ENCODE measurements at regions of chr4 and their contacts with region 1.

Region 1: DNA sequence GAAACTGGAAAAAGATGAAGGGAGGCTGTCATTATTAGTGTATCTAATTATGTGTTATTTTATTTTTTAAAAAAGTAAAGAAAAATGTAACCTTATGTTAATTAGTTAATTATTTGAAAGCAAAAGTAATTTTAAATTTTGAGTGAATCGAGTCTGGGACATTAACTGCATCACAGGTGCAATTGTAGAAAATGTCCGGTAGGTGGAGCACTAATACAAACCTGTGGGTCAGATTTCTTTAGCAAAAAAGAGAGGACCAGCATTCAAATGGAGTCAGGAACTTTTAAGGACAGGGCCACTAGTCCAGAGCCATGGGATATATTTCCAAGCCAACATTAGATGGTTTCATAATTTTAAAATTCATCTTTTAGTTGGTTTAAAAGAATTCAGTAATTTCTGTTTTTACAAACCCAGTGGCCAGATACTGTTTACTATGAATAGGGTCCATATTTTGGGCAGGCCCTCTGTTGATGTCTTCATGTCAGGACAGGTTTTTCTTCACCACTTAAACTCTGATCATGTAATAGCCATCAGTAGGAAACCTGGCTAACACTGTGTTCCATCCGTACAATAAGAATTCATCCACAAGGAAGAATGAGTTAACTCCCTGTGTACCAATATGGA is 27.2 kb downstream of the BST1 start:
- DNase-seq: peak; percentile 78
- H3K4me3 ChIP-seq: no peak overlapping the region
- H3K27ac ChIP-seq: no peak overlapping the region
- H3K4me1 ChIP-seq: peaks cover 42% of the 10 kb centered on the region
- CTCF ChIP-seq: peak; percentile 99

Region 2: DNA sequence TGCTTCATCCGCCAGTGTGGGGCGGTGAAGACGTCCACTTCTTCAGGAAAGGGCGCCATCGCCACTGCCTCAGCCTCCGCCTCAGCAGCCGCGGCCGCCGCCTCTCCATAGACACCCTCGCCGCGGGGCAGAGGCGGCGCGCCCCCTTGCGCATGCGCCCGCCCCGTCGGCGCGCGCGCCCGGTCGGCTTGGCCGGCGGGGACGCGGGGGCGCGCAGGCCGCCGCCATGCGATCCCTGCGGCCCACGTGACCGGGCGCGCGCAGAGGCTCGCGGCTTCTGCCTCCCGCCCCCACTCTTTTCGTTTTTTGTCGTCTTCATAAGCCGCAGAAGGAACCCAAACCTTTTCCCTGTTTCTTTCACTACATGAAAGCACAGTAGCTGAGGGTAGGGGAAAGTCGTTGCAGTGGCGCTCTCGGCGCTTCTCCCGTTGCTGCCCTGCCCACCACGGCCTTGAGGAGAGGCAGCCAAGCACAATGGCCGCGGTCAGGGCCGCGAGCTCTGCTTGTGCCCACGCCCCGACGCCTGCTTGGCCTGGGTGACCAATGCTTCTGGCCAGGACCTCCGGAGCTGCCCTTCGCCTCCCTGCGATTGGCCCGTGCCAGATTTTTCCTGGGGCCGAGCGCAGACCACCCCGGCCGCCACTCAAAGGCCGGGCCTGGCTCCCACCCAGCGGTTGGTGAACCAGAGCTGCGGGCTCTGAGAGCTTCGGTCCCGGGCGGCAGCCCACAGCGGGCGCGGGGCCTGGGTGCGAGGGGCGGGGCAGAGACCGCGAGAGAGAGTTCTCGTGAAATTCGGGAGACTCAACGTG is 74.6 kb before region 1 on chr4 and contains the start of gene FBXL5:
- CTCF ChIA-PET with region 1: no interaction called
- POLR2A ChIA-PET with region 1: interaction called, 3 read pairs
- intact Hi-C with region 1: loop called (anchors 2 kb)
- DNase-seq: peak; percentile 92
- H3K4me3 ChIP-seq: peak within 1 kb of the TSS; percentile 92
- H3K27ac ChIP-seq: peak within 1 kb of the TSS; percentile 68
- H3K4me1 ChIP-seq: peaks cover 48% of the 10 kb centered on the region
- CTCF ChIP-seq: no peak
- total RNA-seq, gene FBXL5: 73.9 and 102 TPM in 2 replicates

Region 3: GRCh38 chr4:15744016-15744545 is 14.1 kb after region 1 on chr4:
- CTCF ChIA-PET with region 1: no interaction called
- POLR2A ChIA-PET with region 1: no interaction called
- intact Hi-C with region 1: no loop called
- DNase-seq: no peak
- H3K4me3 ChIP-seq: no peak overlapping the region
- H3K27ac ChIP-seq: no peak overlapping the region
- H3K4me1 ChIP-seq: no peaks in the 10 kb centered on the region
- CTCF ChIP-seq: no peak

Region 4: DNA sequence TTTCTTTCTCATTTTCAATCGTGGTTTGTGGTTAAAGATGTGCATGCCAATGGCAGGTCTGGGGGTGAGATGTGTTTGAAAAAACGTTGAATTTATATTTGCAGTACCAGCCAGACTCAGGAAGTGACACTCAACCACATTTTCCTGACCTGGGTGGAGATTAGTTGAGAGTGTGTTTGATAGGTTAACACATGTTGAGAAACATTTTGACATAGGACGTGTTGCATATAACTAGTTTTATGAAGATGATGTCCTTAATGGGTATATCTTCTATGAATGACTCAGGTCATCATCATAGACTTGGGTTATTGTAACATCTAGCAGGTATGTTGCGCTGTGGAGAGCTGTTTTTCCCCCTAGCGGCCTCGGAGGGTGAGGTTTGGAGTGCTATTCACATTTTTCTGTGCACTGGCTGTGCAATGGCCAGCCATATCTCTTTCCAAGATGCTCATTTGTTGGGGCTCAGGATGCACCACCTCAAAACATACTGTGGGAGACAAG is 26.4 kb after region 1 on chr4:
- CTCF ChIA-PET with region 1: no interaction called
- POLR2A ChIA-PET with region 1: interaction called, 11 read pairs
- intact Hi-C with region 1: no loop called
- DNase-seq: peak; percentile 67
- H3K4me3 ChIP-seq: peak overlapping the region; percentile 51
- H3K27ac ChIP-seq: peak overlapping the region; percentile 57
- H3K4me1 ChIP-seq: peaks cover 39% of the 10 kb centered on the region
- CTCF ChIP-seq: peak; percentile 70

Region 5: DNA sequence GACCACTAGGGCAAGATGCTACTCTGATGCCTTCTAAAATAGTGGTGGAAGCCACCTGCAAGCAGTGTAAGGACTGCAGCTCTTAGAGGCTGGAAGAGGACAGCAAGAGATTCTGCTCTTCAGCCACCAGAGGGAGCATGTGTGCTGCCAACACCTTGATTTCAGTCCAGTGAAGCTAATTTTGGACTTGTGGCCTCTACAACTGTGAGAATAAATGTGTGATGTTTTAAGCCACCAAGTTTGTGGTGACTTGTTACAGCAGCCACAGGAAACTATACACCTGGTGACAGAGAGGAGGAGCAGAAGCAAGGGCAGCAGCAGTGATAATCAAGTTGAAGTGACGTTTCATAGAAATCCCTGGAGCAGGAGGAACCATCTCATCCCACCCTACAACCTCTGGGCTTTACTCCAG is 152.7 kb after region 1 on chr4:
- CTCF ChIA-PET with region 1: no interaction called
- POLR2A ChIA-PET with region 1: no interaction called
- intact Hi-C with region 1: loop called (anchors 2 kb)
- DNase-seq: peak; percentile 87
- H3K4me3 ChIP-seq: no peak overlapping the region
- H3K27ac ChIP-seq: no peak overlapping the region
- H3K4me1 ChIP-seq: peaks cover 3% of the 10 kb centered on the region
- CTCF ChIP-seq: peak; percentile 94

Region 6: DNA sequence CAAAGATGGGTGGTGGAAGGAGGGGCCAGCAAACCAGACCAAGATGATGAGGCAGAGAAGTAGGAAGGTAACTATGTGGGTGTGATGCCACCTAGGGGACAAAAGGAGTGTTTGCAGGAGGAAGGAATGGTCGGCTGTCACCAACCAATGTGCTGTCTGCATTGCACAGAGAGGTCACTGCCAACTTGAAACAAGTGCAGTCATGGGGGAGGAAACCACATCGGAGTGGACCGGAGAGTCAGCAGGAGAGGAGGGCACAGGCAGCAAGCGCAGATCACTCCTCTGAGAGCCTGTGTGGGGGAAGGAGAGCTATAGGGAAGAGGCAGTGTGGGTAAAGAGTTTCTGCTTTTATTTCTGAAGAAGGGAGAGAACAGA is 271.4 kb after region 1 on chr4:
- CTCF ChIA-PET with region 1: no interaction called
- POLR2A ChIA-PET with region 1: no interaction called
- intact Hi-C with region 1: loop called (anchors 1 kb)
- DNase-seq: peak; percentile 75
- H3K4me3 ChIP-seq: no peak overlapping the region
- H3K27ac ChIP-seq: no peak overlapping the region
- H3K4me1 ChIP-seq: no peaks in the 10 kb centered on the region
- CTCF ChIP-seq: peak; percentile 92

Measured in OCI-LY7 (cell line).